AG04450 (cell line): ENCODE measurements at regions of chr3 and their contacts with region 1.

Region 1: DNA sequence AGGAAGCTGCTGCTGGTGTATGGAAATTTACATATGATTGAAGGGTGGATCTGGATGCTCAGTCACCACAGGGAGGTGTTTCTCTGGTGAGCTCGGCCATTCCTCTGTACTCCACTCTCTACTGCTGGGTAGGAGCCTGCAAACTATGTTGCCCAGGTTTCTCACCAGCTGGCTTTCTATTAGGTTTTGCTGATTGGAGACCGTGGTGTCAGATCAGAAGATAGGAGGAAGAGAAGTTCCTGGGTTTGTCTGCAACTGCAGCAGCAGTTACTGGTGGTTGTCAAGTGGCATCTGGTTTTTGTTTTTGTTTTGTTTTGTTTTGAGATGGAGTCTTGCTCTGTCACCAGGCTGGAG is 61.7 kb downstream of the TAMM41 start:
- DNase-seq: no peak
- H3K4me3 ChIP-seq: no peak overlapping the region
- H3K27ac ChIP-seq: no peak overlapping the region
- H3K27me3 ChIP-seq: no peaks in the 10 kb centered on the region
- CTCF ChIP-seq: no peak

Region 2: DNA sequence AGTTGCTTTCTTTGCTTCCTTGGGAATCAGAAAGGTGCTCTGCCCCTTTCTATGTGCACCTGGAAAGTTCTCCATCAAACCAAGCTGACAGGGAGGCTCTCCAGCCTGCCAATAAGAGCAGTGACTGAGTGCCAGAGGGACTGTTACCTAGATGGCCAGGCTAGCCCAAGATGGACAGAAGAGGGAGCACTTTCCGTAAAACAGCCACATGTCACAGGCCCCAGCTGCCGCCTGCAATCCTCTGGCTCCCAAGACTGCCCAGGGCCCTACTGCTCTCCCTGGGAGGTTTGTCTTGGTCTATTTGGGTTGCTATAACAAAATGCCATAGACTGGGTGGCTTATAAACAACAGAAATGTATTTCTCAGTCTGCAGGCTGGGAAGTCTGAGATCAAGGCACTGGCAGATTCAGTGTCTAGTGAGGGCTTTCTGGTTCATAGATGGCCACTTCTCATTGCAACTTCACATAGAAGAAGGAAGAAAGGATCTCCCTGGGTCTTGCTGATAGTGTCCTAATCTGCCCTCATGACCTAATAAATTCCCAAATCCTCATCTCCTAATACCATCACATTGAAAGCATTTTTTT is 10.6 kb before region 1 on chr3:
- CTCF ChIA-PET with region 1: interaction called, 22 read pairs
- POLR2A ChIA-PET with region 1: no interaction called
- DNase-seq: no peak
- H3K4me3 ChIP-seq: no peak overlapping the region
- H3K27ac ChIP-seq: no peak overlapping the region
- H3K27me3 ChIP-seq: peaks cover 6% of the 10 kb centered on the region
- CTCF ChIP-seq: peak; percentile 66